Esophagus squamous epithelium (tissue), 5 donors: ENCODE measurements at regions of chr5 and their contacts with region 1.

Region 1: DNA sequence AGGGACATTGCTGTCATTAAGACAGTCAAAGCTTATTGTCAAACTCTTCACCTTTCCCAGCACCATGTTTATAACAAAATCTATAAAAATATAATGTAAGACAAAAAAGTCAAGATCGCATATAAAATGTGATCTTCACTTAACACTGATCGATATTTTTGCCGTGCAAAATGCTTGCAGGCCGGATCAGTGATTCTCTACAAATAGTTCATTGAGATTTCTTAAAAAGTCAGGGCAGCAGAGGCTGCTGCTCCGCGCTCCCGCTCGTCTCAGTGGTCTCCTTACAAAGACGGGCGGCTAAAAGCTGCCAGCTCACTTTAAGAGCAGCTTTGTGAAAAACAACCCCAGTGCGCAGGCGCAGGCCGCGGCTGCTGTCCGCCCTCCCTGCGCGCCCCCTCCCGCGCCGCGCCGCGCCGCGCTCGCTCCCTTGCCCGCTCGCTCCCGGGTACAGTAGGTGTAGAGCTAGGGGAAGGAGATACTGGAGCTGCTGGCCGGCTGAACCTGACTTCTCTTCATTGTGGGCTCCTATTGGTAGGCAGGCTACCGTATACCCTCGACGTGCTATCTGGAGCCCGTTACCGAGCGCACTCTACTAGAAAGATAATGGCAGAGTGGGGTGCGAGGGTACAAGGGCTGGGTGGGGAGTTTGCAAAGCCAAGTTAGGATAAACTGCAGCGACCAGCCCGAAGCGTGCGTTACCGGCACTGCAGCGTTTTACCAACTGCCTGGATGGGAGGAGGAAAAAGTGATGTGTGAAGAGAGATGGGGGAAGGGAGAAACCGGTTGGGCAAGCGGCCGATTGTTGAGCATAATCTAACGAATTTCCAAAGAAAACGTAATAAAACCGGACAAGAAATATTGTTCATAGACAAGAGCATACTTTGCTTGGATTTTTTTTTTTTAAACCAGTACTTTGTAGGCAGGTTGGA is at the start of gene ARRDC3:
- DNase-seq: peak; percentile 83
- H3K4me3 ChIP-seq: peak within 1 kb of the TSS; percentile 63 to 91 (median 78)
- H3K27ac ChIP-seq: peak within 1 kb of the TSS; percentile 96 to 100 (median 98)
- H3K4me1 ChIP-seq: peaks cover 12 to 27% (median 14%) of the 10 kb centered on the region in 3 donors
- H3K27me3 ChIP-seq: no peaks in the 10 kb centered on the region
- CTCF ChIP-seq: peak in 2 of 6 experiments; percentile 5 to 15
- POLR2A ChIP-seq: peak in 3 of 4 donors; percentile 97 to 99 (median 98)
- total RNA-seq, gene ARRDC3: 35.4 to 64.8 (median 54.7) TPM

Region 2: GRCh38 chr5:90932052-90932699 is 451.1 kb before region 1 on chr5:
- intact Hi-C with region 1: loop called (anchors 10 kb)
- DNase-seq: no peak
- H3K4me3 ChIP-seq: no peak overlapping the region
- H3K27ac ChIP-seq: no peak overlapping the region
- H3K4me1 ChIP-seq: peaks cover 0 to 10% (median 0%) of the 10 kb centered on the region in 3 donors
- H3K27me3 ChIP-seq: no peaks in the 10 kb centered on the region
- CTCF ChIP-seq: peak; percentile 25 to 79 (median 66)
- POLR2A ChIP-seq: no peak

Region 3: GRCh38 chr5:91101600-91102379 is 281.5 kb before region 1 on chr5:
- intact Hi-C with region 1: loop called (anchors 5 kb)
- DNase-seq: peak; percentile 10
- H3K4me3 ChIP-seq: no peak overlapping the region
- H3K27ac ChIP-seq: no peak overlapping the region
- H3K4me1 ChIP-seq: peaks cover 0 to 18% (median 3%) of the 10 kb centered on the region in 3 donors
- H3K27me3 ChIP-seq: no peaks in the 10 kb centered on the region
- CTCF ChIP-seq: peak in 5 of 6 experiments; percentile 68 to 89 (median 79)
- POLR2A ChIP-seq: no peak

Region 4: DNA sequence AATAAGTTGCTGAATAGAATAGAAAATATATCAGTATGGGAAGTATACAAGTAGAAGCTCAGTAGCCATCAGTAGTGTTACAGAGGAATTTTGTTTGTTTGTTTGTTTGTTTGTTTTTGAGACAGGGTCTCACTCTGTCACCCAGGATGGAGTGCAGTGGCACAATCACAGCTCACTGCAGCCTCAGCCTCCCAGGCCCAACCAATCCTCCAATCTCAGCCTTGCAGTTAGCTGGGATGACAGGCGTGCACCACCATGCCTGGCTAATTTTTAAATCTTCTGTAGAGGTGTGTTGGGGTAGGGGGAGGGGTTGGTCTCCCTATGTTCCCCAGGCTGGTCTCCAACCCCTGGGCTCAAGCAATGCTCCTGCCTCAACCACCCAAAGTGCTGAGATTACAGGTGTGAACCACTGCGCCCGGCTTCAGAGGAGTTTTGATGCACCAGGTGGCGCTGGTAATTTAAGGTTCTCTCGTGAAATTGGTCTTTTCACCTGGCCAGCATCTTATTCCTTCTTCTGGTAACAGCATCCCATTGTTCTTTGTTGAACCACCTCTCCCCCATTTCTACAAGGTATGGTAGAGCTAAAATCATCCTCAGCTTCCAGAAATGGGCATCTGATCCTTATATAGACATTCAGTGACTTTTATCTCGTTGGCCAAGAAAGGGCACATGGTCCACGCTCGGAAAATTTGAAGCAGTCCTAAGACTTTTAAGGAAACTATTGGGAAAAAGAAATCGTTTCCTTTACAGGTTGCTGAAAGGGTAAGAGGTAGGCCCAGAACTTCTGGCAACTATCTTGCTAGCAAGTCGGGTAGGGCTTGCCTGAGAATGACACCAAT is 157.2 kb before region 1 on chr5:
- intact Hi-C with region 1: loop called (anchors 5 kb)
- DNase-seq: no peak
- H3K4me3 ChIP-seq: no peak overlapping the region
- H3K27ac ChIP-seq: no peak overlapping the region
- H3K4me1 ChIP-seq: no peaks in the 10 kb centered on the region
- H3K27me3 ChIP-seq: no peaks in the 10 kb centered on the region
- CTCF ChIP-seq: peak; percentile 22 to 70 (median 57)
- POLR2A ChIP-seq: no peak

Region 5: GRCh38 chr5:91794856-91795548 is 411.7 kb after region 1 on chr5:
- intact Hi-C with region 1: no loop called
- DNase-seq: no peak
- H3K4me3 ChIP-seq: no peak overlapping the region
- H3K27ac ChIP-seq: no peak overlapping the region
- H3K4me1 ChIP-seq: no peaks in the 10 kb centered on the region
- H3K27me3 ChIP-seq: no peaks in the 10 kb centered on the region
- CTCF ChIP-seq: no peak
- POLR2A ChIP-seq: no peak